ENCODE measurements at regions of chr17 and their contacts with region 1.

Region 1: DNA sequence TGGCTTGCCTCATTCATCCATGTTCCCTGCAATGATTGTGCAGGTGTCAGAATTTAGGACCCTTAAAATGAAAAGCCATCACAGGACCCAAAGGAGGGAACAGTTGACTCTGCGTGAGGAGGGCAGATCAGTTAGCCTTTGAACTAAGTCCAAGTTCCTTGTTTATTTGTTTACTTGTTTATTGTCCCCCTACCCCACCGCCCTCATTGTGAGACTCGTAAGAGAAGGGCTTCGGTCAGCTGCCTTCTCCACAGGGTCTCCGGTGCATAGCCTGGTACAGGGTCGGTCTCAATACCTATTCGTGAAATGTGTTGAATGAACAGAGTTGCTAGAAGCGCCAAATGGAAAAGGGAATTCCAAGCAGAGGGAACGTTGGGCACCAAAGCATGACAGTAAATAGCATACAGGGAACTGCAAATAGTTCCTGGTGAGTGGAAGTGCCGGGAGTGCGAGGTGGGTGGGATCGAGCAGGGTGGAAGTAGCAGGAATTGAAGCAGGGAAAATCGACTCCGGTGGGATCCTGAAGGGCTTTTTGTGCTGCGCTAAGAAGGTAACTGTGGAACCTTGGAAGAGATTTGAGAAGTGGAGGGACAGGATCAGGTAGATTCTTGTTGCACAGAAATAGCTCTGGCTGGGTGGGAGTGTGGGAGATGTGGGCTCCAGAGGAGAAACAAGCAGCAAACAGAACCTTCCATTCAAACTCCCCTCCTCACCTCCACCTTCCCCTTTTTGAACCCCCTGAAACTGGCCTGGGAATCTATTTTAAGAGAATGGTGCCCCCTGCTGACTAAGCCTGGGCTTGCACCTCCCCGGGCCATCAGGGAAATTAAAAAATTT is 12.7 kb downstream of the SLC35B1 start:
- DNase-seq: peak; percentile 54
- ATAC-seq: peak in 1 of 8 donors; percentile 33
- H3K4me3 ChIP-seq: no peak overlapping the region
- H3K27ac ChIP-seq: no peak overlapping the region
- H3K4me1 ChIP-seq: peaks cover 5 to 62% (median 25%) of the 10 kb centered on the region in 9 donors
- H3K27me3 ChIP-seq: no peaks in the 10 kb centered on the region
- CTCF ChIP-seq: peak; percentile 86 to 97 (median 93)

Region 2: DNA sequence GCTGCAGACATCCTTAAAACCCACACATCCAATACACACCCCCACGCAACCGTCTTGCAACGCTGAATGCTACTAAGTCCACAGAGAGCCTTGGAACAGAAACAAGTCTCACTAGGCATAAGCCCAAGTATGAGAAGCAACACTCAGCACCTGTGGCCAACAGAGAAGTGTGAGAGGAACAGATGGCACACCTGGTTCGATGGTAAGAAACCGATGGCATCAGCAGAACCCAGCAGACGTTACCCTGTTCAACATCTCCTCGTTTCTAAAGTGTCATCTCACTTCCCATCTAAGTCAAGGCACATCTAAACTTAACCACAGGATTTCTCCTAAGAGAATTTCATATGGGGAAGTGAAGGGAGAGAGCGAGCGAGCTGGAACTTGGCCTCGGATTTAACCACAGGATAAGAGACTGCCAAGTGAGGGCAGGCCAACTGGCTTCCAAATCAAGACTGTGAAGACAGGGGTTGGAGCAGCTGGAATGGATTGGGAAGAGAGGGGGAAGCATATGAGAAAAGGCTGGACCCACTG is 78.4 kb before region 1 on chr17:
- intact Hi-C with region 1: loop called in 2 of 10 experiments (anchors 5 kb)
- DNase-seq: peak; percentile 65 to 74
- ATAC-seq: peak; percentile 81 to 92 (median 84)
- H3K4me3 ChIP-seq: peak overlapping the region in 1 of 10 donors; percentile 3
- H3K27ac ChIP-seq: peak overlapping the region in 9 of 10 donors; percentile 2 to 70 (median 59)
- H3K4me1 ChIP-seq: peaks cover 4 to 70% (median 42%) of the 10 kb centered on the region in 9 donors
- H3K27me3 ChIP-seq: no peaks in the 10 kb centered on the region
- CTCF ChIP-seq: no peak

Region 3: DNA sequence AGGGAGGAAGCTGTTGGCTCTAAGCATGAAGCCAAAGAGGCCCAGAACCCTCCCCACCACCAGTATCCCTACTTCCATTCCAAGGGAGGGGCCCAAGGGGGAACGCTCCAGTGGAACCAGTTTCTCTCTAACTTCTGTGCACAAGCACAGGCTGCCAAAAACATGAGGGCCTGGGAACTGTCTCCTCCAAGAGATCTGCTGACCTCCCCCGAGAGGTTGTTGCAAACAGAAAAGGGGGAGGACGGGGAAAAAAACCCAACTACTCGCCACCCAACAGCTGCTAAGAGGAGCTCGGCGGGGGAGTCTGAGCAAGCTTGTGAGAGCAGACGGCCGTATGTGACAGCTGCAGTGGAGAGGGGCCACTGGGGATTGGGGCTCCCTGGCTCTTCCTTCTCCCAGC is 28.4 kb after region 1 on chr17:
- intact Hi-C with region 1: no loop called
- DNase-seq: peak; percentile 65 to 92
- ATAC-seq: peak; percentile 82 to 95 (median 86)
- H3K4me3 ChIP-seq: peak overlapping the region in 1 of 10 donors; percentile 14
- H3K27ac ChIP-seq: peak overlapping the region; percentile 26 to 86 (median 72)
- H3K4me1 ChIP-seq: peaks cover 8 to 71% (median 36%) of the 10 kb centered on the region in 9 donors
- H3K27me3 ChIP-seq: no peaks in the 10 kb centered on the region
- CTCF ChIP-seq: no peak

Region 4: GRCh38 chr17:49851387-49852291 is 156.6 kb after region 1 on chr17:
- intact Hi-C with region 1: loop called in 2 of 10 experiments (anchors 1 to 10 kb)
- DNase-seq: peak; percentile 84
- ATAC-seq: peak; percentile 76 to 91 (median 86)
- H3K4me3 ChIP-seq: peak overlapping the region; percentile 38 to 76 (median 62)
- H3K27ac ChIP-seq: peak overlapping the region in 9 of 10 donors; percentile 8 to 75 (median 62)
- H3K4me1 ChIP-seq: peaks cover 3 to 25% (median 19%) of the 10 kb centered on the region in 9 donors
- H3K27me3 ChIP-seq: peaks cover 0 to 6% (median 0%) of the 10 kb centered on the region in 7 donors
- CTCF ChIP-seq: peak; percentile 43 to 86 (median 83)

Measured in heart right ventricle (tissue), 16 donors.